ENCODE measurements at regions of chr11 and their contacts with region 1.

Region 1: DNA sequence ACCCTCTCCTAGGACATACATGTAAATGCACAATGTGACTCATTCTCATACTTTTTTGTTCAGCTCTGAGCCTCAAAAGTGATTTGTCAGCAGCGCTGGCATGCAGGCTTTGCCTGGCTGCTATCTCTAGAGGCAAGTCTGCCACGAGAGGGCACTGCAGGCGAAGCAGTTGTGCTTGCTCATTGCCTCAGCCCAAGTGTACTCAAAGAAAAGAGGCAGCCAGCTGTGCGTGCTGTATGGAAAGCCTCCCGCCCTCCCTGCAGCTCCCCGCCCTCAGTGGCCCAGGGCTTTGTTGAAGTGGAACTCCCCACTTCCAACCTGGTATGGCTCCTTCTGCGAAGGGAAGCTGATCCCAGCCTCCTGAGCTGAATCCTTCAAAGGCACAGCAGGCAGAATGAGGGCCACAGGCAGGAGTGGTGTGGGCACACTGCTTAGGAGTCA is 16.3 kb downstream of the SDHAF2 start:
- DNase-seq: peak; percentile 97
- H3K4me3 ChIP-seq: no peak overlapping the region
- H3K27ac ChIP-seq: peak overlapping the region; percentile 48
- H3K4me1 ChIP-seq: peaks cover 8% of the 10 kb centered on the region
- H3K27me3 ChIP-seq: no peaks in the 10 kb centered on the region
- CTCF ChIP-seq: peak; percentile 99

Region 2: DNA sequence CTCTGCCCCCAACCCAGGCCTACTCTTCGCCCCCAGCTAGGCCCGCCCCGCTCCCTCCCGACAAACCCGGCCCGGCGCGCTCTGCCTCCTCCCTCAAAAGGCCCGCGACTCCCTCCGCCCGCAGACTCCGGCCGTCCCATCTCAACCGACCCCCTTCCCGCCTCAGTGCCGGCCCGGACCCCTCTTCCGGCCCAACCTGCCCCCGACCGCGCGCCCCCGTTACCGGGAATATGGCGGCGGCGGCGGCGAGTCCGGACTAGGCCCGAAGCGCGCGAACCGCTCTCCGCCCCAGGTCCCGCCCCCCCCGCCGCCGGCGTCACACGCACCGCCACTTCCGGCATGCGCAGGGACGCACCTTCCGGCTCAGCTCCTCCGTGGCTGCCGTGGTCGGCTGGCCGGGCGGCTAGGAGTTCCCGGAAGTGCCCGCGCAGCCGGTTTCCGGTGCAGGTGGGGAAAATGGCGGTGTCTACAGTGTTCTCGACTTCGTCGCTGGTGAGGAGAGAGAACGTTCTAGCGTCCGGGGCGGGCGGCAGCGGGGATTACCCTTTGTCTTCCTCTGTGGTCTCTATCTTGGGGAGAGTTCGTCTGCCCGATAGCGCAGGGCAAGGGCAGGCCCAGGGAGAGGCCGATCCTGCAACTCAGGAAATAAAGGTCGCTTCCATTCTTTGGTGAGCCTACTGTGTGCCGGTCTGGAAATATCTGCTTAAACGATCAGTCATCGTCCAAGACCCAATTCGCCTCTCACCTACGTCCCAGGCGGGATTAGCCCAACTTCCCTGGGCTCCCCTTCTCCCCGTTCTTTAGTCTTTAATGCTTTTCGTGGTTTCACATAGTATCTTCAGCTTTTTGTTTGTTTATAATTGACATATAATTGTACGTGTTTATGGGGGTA is 16.3 kb before region 1 on chr11 and contains the starts of genes CPSF7 and SDHAF2:
- CTCF ChIA-PET with region 1: interaction called, 15 read pairs
- POLR2A ChIA-PET with region 1: no interaction called
- intact Hi-C with region 1: no loop called
- DNase-seq: peak; percentile 99
- H3K4me3 ChIP-seq: peak within 1 kb of the TSS; percentile 70
- H3K27ac ChIP-seq: peak within 1 kb of the TSS; percentile 99
- H3K4me1 ChIP-seq: peaks cover 12% of the 10 kb centered on the region
- H3K27me3 ChIP-seq: no peaks in the 10 kb centered on the region
- CTCF ChIP-seq: no peak
- total RNA-seq, gene CPSF7: 160 and 162 TPM in 2 replicates
- total RNA-seq, gene SDHAF2: 46.6 and 49.1 TPM in 2 replicates

Region 3: DNA sequence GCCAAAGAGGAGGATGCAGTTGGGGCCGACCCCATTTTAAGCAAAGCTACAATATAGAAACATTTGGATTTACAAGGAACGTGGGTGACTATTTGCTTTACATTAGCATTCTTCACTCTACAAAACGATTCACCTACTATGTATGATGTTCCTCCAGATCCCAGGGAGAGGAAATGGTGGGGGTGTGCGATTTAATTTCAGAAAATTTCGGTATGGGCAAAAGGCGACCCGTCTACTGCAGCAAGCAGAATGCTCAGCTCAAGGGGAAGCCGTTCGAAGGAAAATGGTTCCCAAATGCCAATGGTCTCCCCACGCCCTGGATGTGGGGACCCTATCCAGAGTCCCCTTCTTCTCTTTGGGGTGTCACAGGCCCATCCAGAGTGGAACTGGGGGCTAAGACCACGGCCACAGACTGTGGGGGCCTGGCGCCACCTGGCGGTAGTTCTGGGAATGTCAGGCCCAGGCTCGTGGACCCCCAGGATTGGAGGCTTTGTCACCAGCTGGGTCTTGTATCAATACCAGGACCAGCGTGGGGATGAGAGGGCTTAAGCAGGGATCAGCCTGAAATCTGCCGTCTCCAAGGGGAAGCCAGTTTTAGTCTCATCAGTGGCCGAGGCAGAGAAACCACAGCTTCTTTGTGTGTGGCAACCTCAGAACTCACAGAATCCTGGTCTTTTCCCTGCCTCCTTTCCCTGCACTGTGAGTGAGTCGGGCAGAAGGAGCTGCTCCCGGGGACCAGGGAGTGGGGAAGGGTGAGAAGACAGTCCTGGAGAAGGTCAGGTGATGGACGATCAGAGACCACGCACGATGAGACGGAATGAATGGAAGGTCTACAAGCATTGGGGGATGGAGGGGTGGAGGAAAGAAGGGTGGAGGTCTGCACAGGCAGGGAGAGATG is 70.7 kb after region 1 on chr11:
- CTCF ChIA-PET with region 1: interaction called, 74 read pairs
- POLR2A ChIA-PET with region 1: no interaction called
- intact Hi-C with region 1: loop called (anchors 1 kb)
- DNase-seq: peak; percentile 84
- H3K4me3 ChIP-seq: peak overlapping the region; percentile 31
- H3K27ac ChIP-seq: peak overlapping the region; percentile 65
- H3K4me1 ChIP-seq: peaks cover 41% of the 10 kb centered on the region
- H3K27me3 ChIP-seq: no peaks in the 10 kb centered on the region
- CTCF ChIP-seq: peak; percentile 100

Region 4: GRCh38 chr11:61532139-61533038 is 86.2 kb after region 1 on chr11:
- CTCF ChIA-PET with region 1: interaction called, 9 read pairs
- POLR2A ChIA-PET with region 1: no interaction called
- intact Hi-C with region 1: loop called (anchors 5 kb)
- DNase-seq: peak; percentile 70
- H3K4me3 ChIP-seq: no peak overlapping the region
- H3K27ac ChIP-seq: no peak overlapping the region
- H3K4me1 ChIP-seq: no peaks in the 10 kb centered on the region
- H3K27me3 ChIP-seq: no peaks in the 10 kb centered on the region
- CTCF ChIP-seq: peak; percentile 98

Region 5: DNA sequence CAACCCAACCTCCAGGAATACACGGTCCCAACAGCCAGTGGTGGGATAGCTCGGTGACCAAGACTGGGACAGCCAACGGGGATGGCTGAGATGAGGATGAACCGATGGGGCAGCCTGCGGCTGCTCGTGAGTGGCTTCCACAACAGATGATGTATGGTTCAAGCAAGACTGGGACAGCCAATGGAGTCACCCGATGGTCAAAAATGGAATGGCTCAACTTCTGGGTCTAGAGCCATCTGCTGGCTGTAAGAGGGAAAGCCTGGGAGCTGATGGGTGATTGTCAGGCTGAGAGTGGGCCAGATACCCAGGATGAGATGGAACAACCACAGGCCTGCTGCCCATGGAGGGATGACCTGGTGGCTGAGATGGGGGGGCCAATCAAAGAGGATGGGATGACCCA is 99.1 kb after region 1 on chr11:
- CTCF ChIA-PET with region 1: interaction called, 10 read pairs
- POLR2A ChIA-PET with region 1: no interaction called
- intact Hi-C with region 1: no loop called
- DNase-seq: peak; percentile 35
- H3K4me3 ChIP-seq: no peak overlapping the region
- H3K27ac ChIP-seq: no peak overlapping the region
- H3K4me1 ChIP-seq: no peaks in the 10 kb centered on the region
- H3K27me3 ChIP-seq: no peaks in the 10 kb centered on the region
- CTCF ChIP-seq: peak; percentile 60

Region 6: GRCh38 chr11:61639816-61640443 is 193.7 kb after region 1 on chr11:
- CTCF ChIA-PET with region 1: interaction called, 7 read pairs
- POLR2A ChIA-PET with region 1: no interaction called
- intact Hi-C with region 1: loop called (anchors 2 kb)
- DNase-seq: no peak
- H3K4me3 ChIP-seq: no peak overlapping the region
- H3K27ac ChIP-seq: no peak overlapping the region
- H3K4me1 ChIP-seq: no peaks in the 10 kb centered on the region
- H3K27me3 ChIP-seq: no peaks in the 10 kb centered on the region
- CTCF ChIP-seq: no peak

Region 7: GRCh38 chr11:61733120-61733978 is 287.1 kb after region 1 on chr11:
- CTCF ChIA-PET with region 1: interaction called, 5 read pairs
- POLR2A ChIA-PET with region 1: no interaction called
- intact Hi-C with region 1: loop called (anchors 10 kb)
- DNase-seq: peak; percentile 93
- H3K4me3 ChIP-seq: no peak overlapping the region
- H3K27ac ChIP-seq: no peak overlapping the region
- H3K4me1 ChIP-seq: no peaks in the 10 kb centered on the region
- H3K27me3 ChIP-seq: no peaks in the 10 kb centered on the region
- CTCF ChIP-seq: peak; percentile 100